ENCODE measurements at regions of chr13 and their contacts with region 1.

Region 1: GRCh38 chr13:27388241-27388640 is 36.2 kb upstream of the GTF3A start:
- DNase-seq: no peak
- H3K4me3 ChIP-seq: no peak overlapping the region
- H3K27ac ChIP-seq: no peak overlapping the region
- H3K4me1 ChIP-seq: no peaks in the 10 kb centered on the region
- H3K27me3 ChIP-seq: peaks cover 34% of the 10 kb centered on the region
- CTCF ChIP-seq: no peak
- EP300 ChIP-seq: no peak
- RAD21 ChIP-seq: no peak

Region 2: DNA sequence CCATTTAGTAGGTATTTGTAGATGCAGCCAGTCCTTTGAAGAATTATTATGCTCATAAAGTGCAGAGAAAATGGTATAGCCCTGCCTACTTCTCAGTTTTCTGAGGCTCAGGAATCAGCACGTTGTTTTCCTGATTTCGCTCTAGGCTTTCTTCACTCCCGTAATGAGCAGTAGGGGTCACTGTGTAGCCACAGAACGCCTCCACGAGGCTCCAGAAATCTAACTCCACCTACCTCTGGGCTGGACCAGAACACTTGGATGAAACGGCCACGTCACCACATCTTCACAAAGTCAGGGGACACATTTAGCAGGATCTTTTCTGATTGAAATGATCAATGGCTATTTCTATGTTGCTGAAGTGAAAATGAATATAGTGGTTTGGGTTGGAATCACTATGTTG is 13.6 kb before region 1 on chr13:
- CTCF ChIA-PET with region 1: interaction called, 11 read pairs
- POLR2A ChIA-PET with region 1: no interaction called
- DNase-seq: peak; percentile 75
- H3K4me3 ChIP-seq: no peak overlapping the region; a peak in 1 of 4 replicates
- H3K27ac ChIP-seq: no peak overlapping the region
- H3K4me1 ChIP-seq: no peaks in the 10 kb centered on the region
- H3K27me3 ChIP-seq: peaks cover 62% of the 10 kb centered on the region
- CTCF ChIP-seq: peak; percentile 75
- EP300 ChIP-seq: no peak
- RAD21 ChIP-seq: peak; percentile 82